ENCODE measurements at regions of chr2 and their contacts with region 1.

Region 1: DNA sequence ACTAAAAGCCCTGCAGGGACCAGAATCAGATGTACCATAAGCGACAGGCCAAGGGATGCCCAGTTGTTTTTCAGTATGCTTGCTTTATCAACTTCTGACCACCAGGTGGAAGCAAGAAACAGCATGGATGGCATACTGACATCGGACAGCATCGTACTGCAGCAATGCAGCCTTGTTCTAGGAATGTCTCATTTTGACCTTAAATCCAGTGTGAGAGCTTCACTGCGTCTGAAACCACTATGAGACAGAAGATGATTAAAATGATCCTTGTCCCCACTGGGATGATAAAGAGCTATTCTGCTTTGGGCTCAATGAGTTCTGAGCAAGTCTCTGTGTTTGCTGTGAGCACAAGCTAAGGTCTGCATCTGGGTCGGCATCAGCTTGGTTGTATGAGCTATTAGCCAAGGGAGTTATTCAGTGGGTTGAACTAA is 54.3 kb downstream of the CDK15 start:
- DNase-seq: peak in 7 of 9 experiments; percentile 3 to 70 (median 40)
- ATAC-seq: peak; percentile 61
- H3K4me3 ChIP-seq: no peak overlapping the region
- H3K4me3 Mint-ChIP-seq: no peak overlapping the region
- H3K27ac ChIP-seq: no peak overlapping the region
- H3K27ac Mint-ChIP-seq: no peak overlapping the region
- H3K4me1 ChIP-seq: peaks cover 16% of the 10 kb centered on the region
- H3K4me1 Mint-ChIP-seq: peaks cover 19% of the 10 kb centered on the region
- H3K27me3 ChIP-seq: peaks cover 3 to 5% of the 10 kb centered on the region in 2 experiments
- H3K27me3 Mint-ChIP-seq: peaks cover 36% of the 10 kb centered on the region
- CTCF ChIP-seq: peak; percentile 75

Region 2: DNA sequence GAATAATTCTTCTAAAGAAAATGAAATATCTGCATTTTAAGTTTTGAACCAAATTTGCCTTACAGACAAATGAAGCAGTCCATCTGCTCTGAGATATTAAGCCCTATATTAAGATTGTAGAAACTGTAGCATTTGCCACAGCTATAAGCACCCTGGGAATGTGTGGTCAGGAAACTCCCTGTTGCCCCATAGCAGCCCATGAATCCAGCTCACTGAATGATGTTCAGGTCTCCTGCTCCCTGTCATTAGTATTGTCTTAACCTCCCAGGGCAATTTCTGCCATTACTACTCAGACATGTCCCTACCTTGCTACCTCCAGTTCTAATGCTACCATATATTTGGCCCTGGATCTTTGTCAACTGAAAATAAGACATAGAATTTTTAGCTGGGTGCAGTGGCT is 13.2 kb before region 1 on chr2:
- CTCF ChIA-PET with region 1: interaction called, 19 read pairs
- POLR2A ChIA-PET with region 1: no interaction called
- intact Hi-C with region 1: no loop called
- DNase-seq: no peak
- ATAC-seq: no peak
- H3K4me3 ChIP-seq: no peak overlapping the region
- H3K4me3 Mint-ChIP-seq: no peak overlapping the region
- H3K27ac ChIP-seq: no peak overlapping the region
- H3K27ac Mint-ChIP-seq: no peak overlapping the region
- H3K4me1 ChIP-seq: no peaks in the 10 kb centered on the region
- H3K4me1 Mint-ChIP-seq: no peaks in the 10 kb centered on the region
- H3K27me3 ChIP-seq: no peaks in the 10 kb centered on the region
- H3K27me3 Mint-ChIP-seq: peaks cover 30% of the 10 kb centered on the region
- CTCF ChIP-seq: no peak

Region 3: GRCh38 chr2:202056392-202057010 is 195.8 kb after region 1 on chr2:
- CTCF ChIA-PET with region 1: interaction called, 12 read pairs
- POLR2A ChIA-PET with region 1: no interaction called
- intact Hi-C with region 1: loop called in 1 of 2 experiments (anchors 5 kb)
- DNase-seq: peak in 2 of 9 experiments; percentile 13 to 24
- ATAC-seq: no peak
- H3K4me3 ChIP-seq: no peak overlapping the region
- H3K4me3 Mint-ChIP-seq: no peak overlapping the region
- H3K27ac ChIP-seq: no peak overlapping the region
- H3K27ac Mint-ChIP-seq: no peak overlapping the region
- H3K4me1 ChIP-seq: no peaks in the 10 kb centered on the region
- H3K4me1 Mint-ChIP-seq: no peaks in the 10 kb centered on the region
- H3K27me3 ChIP-seq: peaks cover 2 to 4% of the 10 kb centered on the region in 2 experiments
- H3K27me3 Mint-ChIP-seq: peaks cover 56% of the 10 kb centered on the region
- CTCF ChIP-seq: no peak

Region 4: DNA sequence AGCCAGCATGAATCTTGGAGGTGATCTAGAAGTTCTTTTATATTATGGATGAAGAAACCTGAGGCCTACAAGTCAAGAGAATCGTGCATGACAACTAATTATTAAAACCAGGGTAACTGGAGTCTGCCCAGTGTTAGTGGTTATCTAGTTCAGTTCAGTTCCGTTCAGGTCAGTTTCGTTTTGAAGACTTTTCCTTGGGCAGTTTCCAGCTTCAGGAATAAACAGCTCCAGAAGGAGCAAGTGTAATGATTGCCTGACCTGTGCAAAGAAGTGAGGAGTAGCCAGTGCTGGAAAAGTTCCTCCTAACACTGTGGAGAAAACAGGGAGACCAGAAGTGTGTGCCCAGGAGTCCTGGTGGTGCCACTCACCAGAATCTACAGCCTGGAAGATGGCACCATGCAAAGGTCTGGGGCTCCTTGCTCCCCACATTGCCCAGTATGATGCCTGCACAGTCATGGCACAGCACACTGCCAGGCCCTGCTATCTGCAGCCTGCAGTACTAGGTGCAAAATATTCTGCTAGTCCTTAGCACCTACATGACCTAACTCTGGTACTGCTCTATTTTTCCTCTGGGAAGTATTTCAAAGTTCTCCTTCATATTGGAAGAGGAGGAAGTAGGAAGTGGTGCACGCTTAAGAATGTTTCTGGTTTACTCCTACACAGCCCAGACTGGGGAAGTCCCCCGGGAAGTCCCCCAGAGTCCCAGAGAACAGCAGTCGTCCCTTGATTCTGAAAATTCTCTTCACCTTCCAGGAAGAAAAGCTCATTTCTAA is 312.0 kb after region 1 on chr2:
- CTCF ChIA-PET with region 1: interaction called, 137 read pairs
- POLR2A ChIA-PET with region 1: no interaction called
- intact Hi-C with region 1: no loop called
- DNase-seq: peak in 2 of 9 experiments; percentile 7 to 29
- ATAC-seq: no peak
- H3K4me3 ChIP-seq: no peak overlapping the region
- H3K4me3 Mint-ChIP-seq: no peak overlapping the region
- H3K27ac ChIP-seq: no peak overlapping the region
- H3K27ac Mint-ChIP-seq: no peak overlapping the region
- H3K4me1 ChIP-seq: peaks cover 4% of the 10 kb centered on the region
- H3K4me1 Mint-ChIP-seq: peaks cover 14% of the 10 kb centered on the region
- H3K27me3 ChIP-seq: no peaks in the 10 kb centered on the region
- H3K27me3 Mint-ChIP-seq: peaks cover 14% of the 10 kb centered on the region
- CTCF ChIP-seq: no peak

Region 5: GRCh38 chr2:202178342-202178958 is 317.8 kb after region 1 on chr2:
- CTCF ChIA-PET with region 1: interaction called, 137 read pairs
- POLR2A ChIA-PET with region 1: no interaction called
- intact Hi-C with region 1: loop called (anchors 1 kb)
- DNase-seq: peak; percentile 11 to 70 (median 52)
- ATAC-seq: peak; percentile 61
- H3K4me3 ChIP-seq: no peak overlapping the region
- H3K4me3 Mint-ChIP-seq: no peak overlapping the region
- H3K27ac ChIP-seq: no peak overlapping the region
- H3K27ac Mint-ChIP-seq: no peak overlapping the region
- H3K4me1 ChIP-seq: no peaks in the 10 kb centered on the region
- H3K4me1 Mint-ChIP-seq: no peaks in the 10 kb centered on the region
- H3K27me3 ChIP-seq: no peaks in the 10 kb centered on the region
- H3K27me3 Mint-ChIP-seq: peaks cover 10% of the 10 kb centered on the region
- CTCF ChIP-seq: peak; percentile 88

Region 6: GRCh38 chr2:202307690-202308089 is 447.0 kb after region 1 on chr2:
- CTCF ChIA-PET with region 1: no interaction called
- POLR2A ChIA-PET with region 1: no interaction called
- intact Hi-C with region 1: no loop called
- DNase-seq: no peak
- ATAC-seq: no peak
- H3K4me3 ChIP-seq: no peak overlapping the region
- H3K4me3 Mint-ChIP-seq: no peak overlapping the region
- H3K27ac ChIP-seq: no peak overlapping the region
- H3K27ac Mint-ChIP-seq: no peak overlapping the region
- H3K4me1 ChIP-seq: no peaks in the 10 kb centered on the region
- H3K4me1 Mint-ChIP-seq: no peaks in the 10 kb centered on the region
- H3K27me3 ChIP-seq: no peaks in the 10 kb centered on the region
- H3K27me3 Mint-ChIP-seq: no peaks in the 10 kb centered on the region
- CTCF ChIP-seq: no peak

Measured in CD8-positive, alpha-beta T cell (primary cell).